ENCODE measurements at regions of chr13 and their contacts with region 1.

Region 1: DNA sequence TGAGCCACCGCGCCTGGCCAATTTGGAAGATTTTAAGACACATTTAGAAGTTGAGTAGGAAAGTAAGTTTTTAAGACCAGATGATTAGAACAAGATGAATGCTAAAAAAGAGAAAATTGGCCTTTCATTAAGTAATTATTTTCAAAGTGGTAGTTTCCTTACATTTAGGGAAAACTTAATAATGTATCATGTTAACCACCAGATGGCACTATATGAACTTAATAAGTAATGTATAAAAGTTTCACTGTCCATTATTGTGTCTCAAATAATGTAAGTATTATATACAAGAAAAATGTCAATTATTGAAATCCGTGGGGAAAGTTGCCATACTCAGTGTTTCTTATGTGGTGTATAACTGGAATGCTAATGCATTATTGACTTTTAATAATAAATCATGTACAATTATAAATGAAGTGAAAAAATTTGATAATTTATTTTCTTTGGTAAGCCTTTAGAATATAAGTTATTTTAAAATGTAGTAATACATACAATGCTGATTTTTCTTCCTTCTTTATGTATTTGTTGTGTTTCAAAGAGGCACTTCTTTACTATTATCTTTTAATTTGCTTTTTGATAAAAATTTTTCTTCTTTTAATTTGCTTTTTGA is 29.2 kb downstream of the COG6 start:
- DNase-seq: no peak
- H3K4me3 Mint-ChIP-seq: no peak overlapping the region
- H3K27ac Mint-ChIP-seq: no peak overlapping the region
- H3K4me1 Mint-ChIP-seq: peaks cover 27% of the 10 kb centered on the region
- H3K27me3 Mint-ChIP-seq: no peaks in the 10 kb centered on the region

Region 2: DNA sequence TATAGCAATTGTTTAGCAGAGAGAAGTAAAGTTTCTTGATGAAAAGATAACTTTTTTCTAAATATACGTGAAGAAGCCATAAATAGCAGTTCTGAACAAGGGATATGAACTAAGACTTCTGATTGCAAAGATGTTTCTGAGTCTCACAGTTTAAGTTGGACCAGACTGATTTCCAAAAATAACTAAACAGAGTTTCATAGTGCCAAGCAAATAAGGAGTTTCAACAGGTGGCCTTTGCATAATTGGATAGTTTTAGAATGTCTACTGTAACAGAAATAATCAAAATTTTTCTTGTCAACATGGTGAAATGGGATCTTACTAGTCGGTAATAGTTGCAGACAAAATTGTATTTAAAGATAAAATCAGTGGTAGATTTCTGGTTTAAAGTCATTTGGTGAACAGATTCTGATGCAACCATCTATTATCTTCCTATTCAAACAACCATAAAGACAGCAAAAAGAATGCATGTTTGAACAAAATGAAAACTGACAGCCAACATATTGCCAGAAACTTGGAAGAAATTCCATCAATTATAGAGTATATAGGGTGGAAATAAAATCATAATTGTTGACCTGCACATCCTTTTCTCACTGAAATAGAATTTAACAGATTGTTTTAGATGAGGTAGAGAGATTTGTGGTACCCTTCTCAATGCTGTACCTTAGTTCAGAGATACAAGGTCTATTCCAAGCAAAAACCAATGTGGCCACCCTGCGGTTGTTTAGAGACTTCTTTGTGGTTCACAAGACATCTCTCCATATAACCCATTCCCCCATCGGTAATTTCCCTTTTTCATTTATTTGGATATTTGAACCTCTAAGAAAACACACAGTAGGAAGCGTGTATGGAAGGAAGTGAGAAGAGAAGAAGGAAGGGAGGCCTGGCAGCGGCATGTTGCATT is 246.2 kb after region 1 on chr13:
- intact Hi-C with region 1: loop called (anchors 5 kb)
- DNase-seq: no peak
- H3K4me3 Mint-ChIP-seq: no peak overlapping the region
- H3K27ac Mint-ChIP-seq: peak overlapping the region; percentile 48
- H3K4me1 Mint-ChIP-seq: peaks cover 24% of the 10 kb centered on the region
- H3K27me3 Mint-ChIP-seq: no peaks in the 10 kb centered on the region

Region 3: GRCh38 chr13:40221460-40222201 is 537.0 kb after region 1 on chr13:
- intact Hi-C with region 1: loop called (anchors 10 kb)
- DNase-seq: peak; percentile 17
- H3K4me3 Mint-ChIP-seq: peak overlapping the region; percentile 1
- H3K27ac Mint-ChIP-seq: peak overlapping the region; percentile 83
- H3K4me1 Mint-ChIP-seq: peaks cover 38% of the 10 kb centered on the region
- H3K27me3 Mint-ChIP-seq: peaks cover 2% of the 10 kb centered on the region

Region 4: DNA sequence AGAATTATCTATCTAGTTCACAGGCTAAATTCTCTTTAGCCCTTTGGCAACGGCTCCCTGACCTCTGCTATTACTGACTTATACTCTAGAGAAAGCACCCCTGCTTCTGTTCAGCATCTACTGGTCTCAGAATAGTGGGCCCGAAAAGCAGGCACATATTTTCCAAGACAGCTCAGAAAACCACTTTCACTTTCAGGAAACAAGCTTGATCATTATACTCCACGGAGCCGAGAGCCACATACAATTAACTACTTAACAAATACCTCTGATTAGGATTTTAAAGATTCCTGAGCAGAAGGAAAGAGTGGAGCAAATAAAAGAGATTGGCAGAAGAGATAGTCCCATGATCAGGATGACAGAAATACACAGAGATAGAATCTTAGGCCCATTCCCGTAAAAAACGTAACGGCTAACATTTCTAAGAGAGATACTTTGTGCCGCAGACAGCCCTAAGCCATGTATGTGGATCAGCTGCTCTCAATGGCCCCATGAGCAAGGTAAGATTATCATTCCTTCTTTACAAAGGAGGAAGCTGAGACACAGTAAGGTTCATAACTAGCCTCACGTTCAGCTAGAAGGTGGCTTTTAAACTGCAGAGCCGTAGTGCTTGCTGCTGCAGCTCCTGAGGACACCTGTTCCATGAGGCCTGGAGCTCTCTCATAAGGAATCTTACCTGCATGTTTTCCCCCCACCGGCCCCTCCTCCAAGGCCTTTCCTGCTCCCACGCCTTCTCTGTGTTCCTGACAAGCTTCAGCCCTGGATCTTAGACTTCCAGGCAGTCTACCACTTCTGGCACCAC is 754.6 kb after region 1 on chr13:
- intact Hi-C with region 1: loop called (anchors 10 kb)
- DNase-seq: no peak
- H3K4me3 Mint-ChIP-seq: peak overlapping the region; percentile 52
- H3K27ac Mint-ChIP-seq: peak overlapping the region; percentile 78
- H3K4me1 Mint-ChIP-seq: peaks cover 30% of the 10 kb centered on the region
- H3K27me3 Mint-ChIP-seq: no peaks in the 10 kb centered on the region

Region 5: GRCh38 chr13:40777166-40777808 is 1092.7 kb after region 1 on chr13:
- intact Hi-C with region 1: loop called (anchors 1 kb)
- DNase-seq: peak; percentile 36
- H3K4me3 Mint-ChIP-seq: peak overlapping the region; percentile 72
- H3K27ac Mint-ChIP-seq: peak overlapping the region; percentile 99
- H3K4me1 Mint-ChIP-seq: peaks cover 35% of the 10 kb centered on the region
- H3K27me3 Mint-ChIP-seq: no peaks in the 10 kb centered on the region